Lower lobe of right lung (tissue), 2 donors: ENCODE measurements at regions of chr3 and their contacts with region 1.

Region 1: GRCh38 chr3:27134165-27134796 is 234.9 kb downstream of the NEK10 start:
- DNase-seq: peak; percentile 51
- ATAC-seq: peak; percentile 88
- H3K4me3 ChIP-seq: no peak overlapping the region
- H3K27ac ChIP-seq: no peak overlapping the region
- H3K4me1 ChIP-seq: no peaks in the 10 kb centered on the region
- H3K27me3 ChIP-seq: no peaks in the 10 kb centered on the region
- CTCF ChIP-seq: peak; percentile 88

Region 2: DNA sequence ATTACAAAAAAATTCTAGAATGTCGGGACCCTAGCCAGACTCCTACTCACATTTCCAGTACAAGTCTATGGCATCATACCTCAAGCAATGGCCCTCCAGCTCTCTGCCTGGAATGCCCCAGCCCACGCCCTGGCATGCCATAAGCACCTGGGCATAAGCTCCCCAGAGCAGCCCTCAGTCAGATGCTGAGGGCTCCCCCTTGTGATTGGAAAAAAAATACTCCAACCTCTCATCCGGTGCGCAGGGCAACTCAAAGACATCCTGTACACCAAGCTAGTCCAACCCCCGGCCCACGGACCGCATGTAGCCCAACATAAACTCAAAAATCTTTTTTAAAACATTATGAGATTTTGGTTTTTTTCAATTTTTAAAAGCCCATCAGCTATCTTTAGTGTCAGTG is 119.5 kb after region 1 on chr3:
- intact Hi-C with region 1: loop called (anchors 10 kb)
- DNase-seq: peak; percentile 48
- ATAC-seq: peak; percentile 83 to 92
- H3K4me3 ChIP-seq: no peak overlapping the region
- H3K27ac ChIP-seq: no peak overlapping the region
- H3K4me1 ChIP-seq: no peaks in the 10 kb centered on the region
- H3K27me3 ChIP-seq: no peaks in the 10 kb centered on the region
- CTCF ChIP-seq: no peak